CD8-positive, alpha-beta T cell (primary cell): ENCODE measurements at regions of chr16 and their contacts with region 1.

Region 1: GRCh38 chr16:56700195-56700594 is 17.9 kb downstream of the MT1X start:
- DNase-seq: no peak
- ATAC-seq: no peak
- H3K4me3 ChIP-seq: no peak overlapping the region
- H3K4me3 Mint-ChIP-seq: no peak overlapping the region
- H3K27ac ChIP-seq: no peak overlapping the region
- H3K27ac Mint-ChIP-seq: no peak overlapping the region
- H3K4me1 ChIP-seq: peaks cover 4% of the 10 kb centered on the region
- H3K4me1 Mint-ChIP-seq: peaks cover 11% of the 10 kb centered on the region
- H3K27me3 ChIP-seq: no peaks in the 10 kb centered on the region
- H3K27me3 Mint-ChIP-seq: no peaks in the 10 kb centered on the region
- CTCF ChIP-seq: no peak

Region 2: GRCh38 chr16:56513972-56514371 is 186.2 kb before region 1 on chr16:
- CTCF ChIA-PET with region 1: interaction called, 35 read pairs
- POLR2A ChIA-PET with region 1: no interaction called
- intact Hi-C with region 1: loop called (anchors 1 kb)
- DNase-seq: peak in 8 of 9 experiments; percentile 9 to 76 (median 52)
- ATAC-seq: peak; percentile 94
- H3K4me3 ChIP-seq: no peak overlapping the region
- H3K4me3 Mint-ChIP-seq: no peak overlapping the region
- H3K27ac ChIP-seq: no peak overlapping the region
- H3K27ac Mint-ChIP-seq: peak overlapping the region; percentile 7
- H3K4me1 ChIP-seq: peaks cover 33% of the 10 kb centered on the region
- H3K4me1 Mint-ChIP-seq: peaks cover 58% of the 10 kb centered on the region
- H3K27me3 ChIP-seq: no peaks in the 10 kb centered on the region
- H3K27me3 Mint-ChIP-seq: no peaks in the 10 kb centered on the region
- CTCF ChIP-seq: peak; percentile 80

Region 3: GRCh38 chr16:56608043-56608875 is 91.9 kb before region 1 on chr16 and contains the start of gene MT2A:
- CTCF ChIA-PET with region 1: interaction called, 27 read pairs
- POLR2A ChIA-PET with region 1: interaction called, 4 read pairs
- intact Hi-C with region 1: loop called in 1 of 2 experiments (anchors 1 kb)
- DNase-seq: peak; percentile 68 to 94 (median 88)
- ATAC-seq: peak; percentile 75
- H3K4me3 ChIP-seq: peak within 1 kb of the TSS; percentile 91 to 95
- H3K4me3 Mint-ChIP-seq: peak within 1 kb of the TSS; percentile 98
- H3K27ac ChIP-seq: peak within 1 kb of the TSS; percentile 68 to 98
- H3K27ac Mint-ChIP-seq: peak within 1 kb of the TSS; percentile 94
- H3K4me1 ChIP-seq: peaks cover 37% of the 10 kb centered on the region
- H3K4me1 Mint-ChIP-seq: peaks cover 47% of the 10 kb centered on the region
- H3K27me3 ChIP-seq: no peaks in the 10 kb centered on the region
- H3K27me3 Mint-ChIP-seq: no peaks in the 10 kb centered on the region
- CTCF ChIP-seq: no peak
- total RNA-seq, gene MT2A: 71.0 to 95.7 TPM

Region 4: GRCh38 chr16:56673921-56674320 is 26.3 kb before region 1 on chr16:
- CTCF ChIA-PET with region 1: interaction called, 57 read pairs
- POLR2A ChIA-PET with region 1: interaction called, 5 read pairs
- intact Hi-C with region 1: loop called (anchors 1 kb)
- DNase-seq: peak in 4 of 9 experiments; percentile 23 to 57 (median 34)
- ATAC-seq: peak; percentile 32
- H3K4me3 ChIP-seq: no peak overlapping the region
- H3K4me3 Mint-ChIP-seq: no peak overlapping the region
- H3K27ac ChIP-seq: no peak overlapping the region
- H3K27ac Mint-ChIP-seq: peak overlapping the region; percentile 11
- H3K4me1 ChIP-seq: peaks cover 12% of the 10 kb centered on the region
- H3K4me1 Mint-ChIP-seq: peaks cover 27% of the 10 kb centered on the region
- H3K27me3 ChIP-seq: peaks cover 7 to 13% of the 10 kb centered on the region in 2 experiments
- H3K27me3 Mint-ChIP-seq: peaks cover 23% of the 10 kb centered on the region
- CTCF ChIP-seq: peak; percentile 52

Region 5: GRCh38 chr16:56729735-56730662 is 29.8 kb after region 1 on chr16 and contains the start of gene NUP93:
- CTCF ChIA-PET with region 1: interaction called, 3 read pairs
- POLR2A ChIA-PET with region 1: interaction called, 3 read pairs
- intact Hi-C with region 1: loop called in 1 of 2 experiments (anchors 1 kb)
- DNase-seq: peak; percentile 76 to 94 (median 90)
- ATAC-seq: peak; percentile 94
- H3K4me3 ChIP-seq: peak within 1 kb of the TSS; percentile 79 to 87
- H3K4me3 Mint-ChIP-seq: no peak within 1 kb of the TSS
- H3K27ac ChIP-seq: peak within 1 kb of the TSS; percentile 58 to 81
- H3K27ac Mint-ChIP-seq: peak within 1 kb of the TSS; percentile 90
- H3K4me1 ChIP-seq: peaks cover 34% of the 10 kb centered on the region
- H3K4me1 Mint-ChIP-seq: peaks cover 23% of the 10 kb centered on the region
- H3K27me3 ChIP-seq: no peaks in the 10 kb centered on the region
- H3K27me3 Mint-ChIP-seq: no peaks in the 10 kb centered on the region
- CTCF ChIP-seq: no peak
- total RNA-seq, gene NUP93: 68.2 to 68.5 TPM